BJ (cell line): ENCODE measurements at regions of chr20 and their contacts with region 1.

Region 1: DNA sequence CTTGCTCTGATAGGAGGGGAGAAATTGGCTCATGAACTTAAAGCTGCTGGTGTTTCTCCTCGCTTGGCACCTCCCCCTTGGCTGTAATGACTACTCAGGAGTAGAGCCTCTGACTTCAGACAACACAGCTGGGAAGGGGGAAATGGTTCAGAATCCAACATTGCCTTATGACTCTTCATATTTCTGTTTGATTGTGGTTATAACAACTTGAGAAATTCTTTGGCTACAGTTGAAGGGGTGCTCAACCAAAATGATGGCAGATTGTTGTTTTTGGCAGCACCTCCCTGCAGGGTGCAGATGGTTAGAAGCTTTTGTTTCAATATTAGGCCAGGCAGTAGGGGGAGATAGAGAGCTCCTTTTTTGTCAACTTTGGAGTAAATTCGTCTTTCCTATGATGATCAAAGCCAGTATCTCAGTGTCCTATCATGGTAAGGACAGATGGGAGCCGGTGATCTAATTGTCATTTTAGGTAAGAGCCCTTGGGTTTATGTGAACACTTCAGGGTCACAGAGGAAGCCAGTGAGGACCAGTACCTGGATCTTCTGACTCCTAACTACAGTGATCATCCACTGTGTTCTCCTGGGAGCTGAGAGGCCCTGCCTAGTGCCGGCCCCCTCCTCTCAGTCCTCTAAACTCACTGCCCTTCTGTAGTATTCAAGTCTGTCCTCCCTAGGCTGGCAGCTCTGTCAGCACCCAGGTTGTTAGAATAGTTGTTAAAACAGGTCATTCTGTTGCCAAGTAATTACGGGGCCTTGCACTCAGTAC is 39.9 kb downstream of the RPRD1B start:
- DNase-seq: peak; percentile 77
- H3K4me3 ChIP-seq: no peak overlapping the region
- H3K27me3 ChIP-seq: no peaks in the 10 kb centered on the region
- CTCF ChIP-seq: peak; percentile 76

Region 2: GRCh38 chr20:38084400-38084951 is 11.0 kb after region 1 on chr20:
- CTCF ChIA-PET with region 1: interaction called, 36 read pairs
- POLR2A ChIA-PET with region 1: no interaction called
- DNase-seq: peak; percentile 62
- H3K4me3 ChIP-seq: no peak overlapping the region
- H3K27me3 ChIP-seq: no peaks in the 10 kb centered on the region
- CTCF ChIP-seq: no peak

Region 3: DNA sequence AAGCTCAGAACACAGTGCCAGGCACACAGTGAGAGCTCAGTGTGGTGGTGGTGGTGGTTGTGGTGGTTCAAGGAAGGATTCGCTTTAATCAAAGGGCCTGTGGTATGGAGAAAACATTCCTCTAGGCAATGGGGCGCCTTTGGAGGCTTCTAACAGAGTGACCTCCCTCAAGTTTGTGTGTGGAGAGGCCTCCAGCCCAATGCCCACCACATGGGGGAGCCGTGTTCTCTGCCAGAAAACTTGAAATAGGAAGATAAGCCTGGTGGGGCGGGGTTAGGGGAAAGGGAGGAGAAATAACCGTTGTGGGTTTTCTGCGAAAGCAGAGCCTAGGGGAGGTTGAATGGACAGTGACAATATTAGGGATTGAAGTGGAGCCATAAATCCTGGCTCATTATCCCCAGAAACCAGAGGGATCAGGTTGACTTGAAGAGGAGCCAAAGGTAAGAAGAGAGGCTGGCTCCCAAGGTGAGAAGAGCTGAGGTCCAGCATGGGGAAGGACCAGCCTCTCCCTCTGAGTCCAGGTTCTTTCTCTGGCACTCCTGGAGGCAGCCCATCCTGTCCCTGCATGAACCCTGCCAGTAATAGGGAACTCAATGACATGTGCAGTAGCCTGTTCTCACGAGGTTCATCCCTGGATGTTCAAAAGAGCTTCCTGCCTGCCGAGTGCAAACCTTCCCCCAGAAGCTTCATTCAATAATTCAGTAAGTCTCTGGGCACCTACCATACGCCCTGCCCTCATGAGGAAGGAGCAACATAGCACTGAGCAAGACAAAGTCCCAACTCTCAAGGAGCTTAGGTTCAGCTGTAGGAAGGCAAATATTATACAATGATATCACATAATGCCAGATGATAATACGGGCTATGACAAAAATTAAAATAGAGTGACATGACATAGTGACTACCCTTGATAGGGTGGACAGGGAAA is 40.2 kb after region 1 on chr20:
- CTCF ChIA-PET with region 1: interaction called, 21 read pairs
- POLR2A ChIA-PET with region 1: no interaction called
- DNase-seq: no peak
- H3K4me3 ChIP-seq: no peak overlapping the region
- H3K27me3 ChIP-seq: no peaks in the 10 kb centered on the region
- CTCF ChIP-seq: peak; percentile 34

Region 4: GRCh38 chr20:38143646-38144554 is 70.4 kb after region 1 on chr20:
- CTCF ChIA-PET with region 1: interaction called, 10 read pairs
- POLR2A ChIA-PET with region 1: no interaction called
- DNase-seq: peak; percentile 63
- H3K4me3 ChIP-seq: no peak overlapping the region
- H3K27me3 ChIP-seq: no peaks in the 10 kb centered on the region
- CTCF ChIP-seq: no peak

Region 5: DNA sequence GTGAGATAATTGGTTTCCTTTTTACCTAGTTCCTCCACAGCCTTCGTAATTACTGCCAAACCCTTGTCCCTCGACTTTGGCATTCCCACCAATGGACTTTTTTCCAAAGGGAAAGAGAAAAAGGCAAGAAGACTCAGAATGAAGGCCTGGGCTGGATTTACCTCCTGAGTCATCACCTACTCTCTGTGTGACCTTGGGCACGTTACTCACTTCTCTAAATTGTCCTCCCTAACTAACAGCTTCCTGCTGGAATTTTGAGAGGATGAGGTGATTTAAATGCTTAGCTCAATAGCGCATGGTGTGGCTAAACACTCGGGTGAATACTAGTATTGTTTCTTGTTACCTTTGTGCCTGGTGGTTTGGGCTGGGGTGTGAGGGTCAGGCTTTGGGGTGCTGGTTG is 1035.3 kb after region 1 on chr20:
- CTCF ChIA-PET with region 1: no interaction called
- POLR2A ChIA-PET with region 1: no interaction called
- DNase-seq: no peak
- H3K4me3 ChIP-seq: no peak overlapping the region
- H3K27me3 ChIP-seq: no peaks in the 10 kb centered on the region
- CTCF ChIP-seq: no peak